Natural killer cell (primary cell): ENCODE measurements at regions of chr10 and their contacts with region 1.

Region 1: DNA sequence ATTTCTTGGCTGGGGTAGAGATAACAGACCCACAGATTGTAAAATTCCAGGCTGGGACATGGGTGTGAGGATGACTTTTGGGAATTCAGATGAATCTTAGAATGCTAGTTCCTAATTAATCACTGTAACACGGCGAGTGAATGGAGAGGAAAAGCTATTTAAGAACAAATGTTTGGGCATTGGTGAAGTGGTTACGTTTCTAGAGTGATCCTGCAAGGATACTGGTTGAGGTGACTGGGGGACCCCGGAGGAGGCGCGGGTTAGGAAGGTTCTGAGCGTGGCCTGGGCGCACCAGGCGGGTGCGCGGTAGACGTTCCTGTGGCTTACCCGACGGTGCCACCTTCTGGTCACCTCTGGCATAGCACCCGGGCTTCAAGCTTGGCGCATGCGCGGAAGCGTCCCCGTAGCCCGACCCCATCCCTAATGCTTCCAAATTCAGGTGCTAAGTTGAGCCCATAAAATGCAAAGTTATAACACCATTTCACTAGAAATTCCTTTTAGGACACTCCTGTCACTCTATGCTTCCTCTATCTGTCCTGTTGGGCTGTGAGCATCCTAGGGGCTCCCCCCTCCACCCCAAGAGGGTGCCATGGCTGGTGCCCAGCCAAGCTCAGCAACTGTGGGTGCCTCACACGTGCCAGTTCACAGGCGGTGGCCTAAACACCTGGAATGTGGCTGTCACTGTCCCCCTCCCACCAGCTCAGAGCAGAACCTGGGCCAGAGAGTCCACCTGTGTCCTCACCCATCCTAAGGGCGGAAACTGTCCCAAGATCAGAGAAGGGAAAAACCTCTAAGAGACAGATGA is 104.5 kb downstream of the PTPRE start:
- DNase-seq: peak; percentile 91 to 93
- ATAC-seq: peak; percentile 98 to 100 (median 98)
- H3K4me3 ChIP-seq: no peak overlapping the region
- H3K4me3 Mint-ChIP-seq: peak overlapping the region; percentile 28
- H3K27ac ChIP-seq: no peak overlapping the region
- H3K27ac Mint-ChIP-seq: peak overlapping the region in 1 of 2 donors; percentile 44
- H3K4me1 ChIP-seq: peaks cover 7% of the 10 kb centered on the region
- H3K4me1 Mint-ChIP-seq: peaks cover 9% of the 10 kb centered on the region in 2 donors
- H3K27me3 ChIP-seq: no peaks in the 10 kb centered on the region
- H3K27me3 Mint-ChIP-seq: peaks cover 0 to 3% of the 10 kb centered on the region in 2 donors
- CTCF ChIP-seq: peak; percentile 98

Region 2: GRCh38 chr10:127715782-127716378 is 295.5 kb before region 1 on chr10:
- intact Hi-C with region 1: loop called (anchors 10 kb)
- DNase-seq: peak in 1 of 2 donors; percentile 29
- ATAC-seq: no peak
- H3K4me3 ChIP-seq: no peak overlapping the region
- H3K4me3 Mint-ChIP-seq: no peak overlapping the region
- H3K27ac ChIP-seq: no peak overlapping the region
- H3K27ac Mint-ChIP-seq: no peak overlapping the region
- H3K4me1 ChIP-seq: no peaks in the 10 kb centered on the region
- H3K4me1 Mint-ChIP-seq: no peaks in the 10 kb centered on the region
- H3K27me3 ChIP-seq: no peaks in the 10 kb centered on the region
- H3K27me3 Mint-ChIP-seq: no peaks in the 10 kb centered on the region
- CTCF ChIP-seq: no peak

Region 3: DNA sequence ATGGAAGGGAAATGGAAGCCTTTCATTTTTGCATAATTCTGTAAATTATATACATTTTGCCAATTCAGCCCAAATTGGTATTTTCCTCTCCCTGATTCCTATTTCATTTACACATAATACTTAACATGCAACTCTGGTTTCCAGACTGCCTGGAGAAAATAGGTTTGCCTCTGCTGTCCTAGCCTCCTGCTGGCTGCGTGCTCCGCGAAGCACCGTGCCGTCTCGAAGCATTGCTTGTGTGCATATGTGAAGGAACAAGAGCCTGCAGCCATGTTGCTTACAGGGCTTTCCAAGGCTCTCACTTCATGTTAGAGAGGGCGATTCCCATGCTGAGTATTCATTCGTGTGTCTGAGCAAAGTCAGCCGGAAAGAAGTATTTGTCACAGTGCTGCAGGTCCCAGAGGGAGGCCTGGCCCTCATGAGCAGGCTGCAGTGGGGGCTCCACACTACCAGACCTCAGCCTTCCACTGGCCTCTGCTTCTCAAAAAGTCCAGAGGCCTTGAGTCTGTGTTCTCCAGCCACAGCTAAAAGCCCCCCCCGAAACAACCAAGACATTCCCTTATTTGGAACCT is 185.1 kb before region 1 on chr10:
- intact Hi-C with region 1: no loop called
- DNase-seq: no peak
- ATAC-seq: no peak
- H3K4me3 ChIP-seq: no peak overlapping the region
- H3K4me3 Mint-ChIP-seq: no peak overlapping the region
- H3K27ac ChIP-seq: no peak overlapping the region
- H3K27ac Mint-ChIP-seq: no peak overlapping the region
- H3K4me1 ChIP-seq: no peaks in the 10 kb centered on the region
- H3K4me1 Mint-ChIP-seq: no peaks in the 10 kb centered on the region
- H3K27me3 ChIP-seq: no peaks in the 10 kb centered on the region
- H3K27me3 Mint-ChIP-seq: peaks cover 6 to 22% of the 10 kb centered on the region in 2 donors
- CTCF ChIP-seq: no peak

Region 4: GRCh38 chr10:127906548-127907377 is 104.6 kb before region 1 on chr10 and contains the start of gene PTPRE:
- intact Hi-C with region 1: loop called (anchors 1 kb)
- DNase-seq: peak; percentile 74 to 75
- ATAC-seq: peak; percentile 91 to 99 (median 98)
- H3K4me3 ChIP-seq: no peak within 1 kb of the TSS
- H3K4me3 Mint-ChIP-seq: peak within 1 kb of the TSS; percentile 49
- H3K27ac ChIP-seq: no peak within 1 kb of the TSS
- H3K27ac Mint-ChIP-seq: no peak within 1 kb of the TSS
- H3K4me1 ChIP-seq: peaks cover 10% of the 10 kb centered on the region
- H3K4me1 Mint-ChIP-seq: no peaks in the 10 kb centered on the region
- H3K27me3 ChIP-seq: peaks cover 11% of the 10 kb centered on the region
- H3K27me3 Mint-ChIP-seq: peaks cover 39 to 65% of the 10 kb centered on the region in 2 donors
- CTCF ChIP-seq: peak; percentile 73
- total RNA-seq, gene PTPRE: 274 to 280 (median 275) TPM